H1 (cell line): ENCODE measurements at regions of chr14 and their contacts with region 1.

Region 1: DNA sequence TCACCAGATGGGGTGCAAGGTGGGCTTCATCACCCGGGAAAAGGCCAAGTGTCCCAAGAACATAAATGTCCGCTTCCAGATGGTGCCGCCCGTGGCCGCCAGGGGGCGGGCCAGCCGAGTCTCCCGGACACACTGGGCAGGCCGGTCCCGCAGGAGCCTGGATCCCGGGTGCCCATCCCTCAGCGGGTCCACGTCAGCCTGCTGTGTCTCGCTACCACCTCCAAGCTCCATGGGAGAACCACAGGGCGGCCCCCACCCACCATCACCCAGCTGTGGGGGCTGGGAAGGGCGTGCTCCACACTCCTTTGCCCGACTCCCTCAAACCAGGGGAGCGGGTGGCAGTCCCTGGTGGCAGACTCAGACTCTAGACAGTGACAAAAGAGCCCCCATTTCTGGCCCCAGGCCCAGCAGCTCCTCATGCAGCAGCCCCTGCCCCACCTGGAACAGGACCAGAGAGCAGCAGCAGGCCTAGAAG is 22.0 kb upstream of the NUDT14 start:
- DNase-seq: peak; percentile 27 to 91
- H3K4me3 ChIP-seq: peak overlapping the region in 1 of 4 experiments; percentile 29; a peak in 1 of 8 replicates
- H3K27ac ChIP-seq: no peak overlapping the region
- H3K4me1 ChIP-seq: peaks cover 0 to 10% (median 1%) of the 10 kb centered on the region in 4 experiments; a peak in 3 of 7 replicates
- H3K27me3 ChIP-seq: peaks cover 0 to 5% (median 2%) of the 10 kb centered on the region in 4 experiments; a peak in 3 of 7 replicates
- CTCF ChIP-seq: peak in 2 of 3 experiments; percentile 84 to 85; a peak in 3 of 4 replicates
- EP300 ChIP-seq: no peak
- POLR2A ChIP-seq: no peak
- RAD21 ChIP-seq: peak; percentile 65 to 72

Region 2: DNA sequence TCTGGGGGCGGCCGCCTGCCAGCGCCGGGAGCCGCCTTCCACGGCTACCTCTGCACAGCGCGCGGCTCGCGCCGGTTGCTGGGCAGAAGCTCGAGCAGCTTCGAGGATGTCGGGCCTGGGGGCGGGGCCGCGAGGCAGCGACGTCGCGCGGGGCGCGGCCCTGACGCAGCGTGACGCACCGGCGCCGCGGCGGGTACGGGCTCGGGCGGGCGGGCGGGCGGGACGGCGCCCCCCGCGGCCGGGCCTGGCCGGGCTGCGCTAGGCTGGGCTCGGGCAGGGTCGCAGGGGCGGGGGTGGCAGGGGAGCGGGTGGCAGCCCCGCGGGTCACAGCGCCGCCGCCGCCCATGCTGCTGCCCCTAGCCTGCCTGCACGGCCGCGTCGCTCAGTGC is 45.3 kb after region 1 on chr14 and contains the start of gene BTBD6:
- CTCF ChIA-PET with region 1: interaction called, 12 read pairs
- POLR2A ChIA-PET with region 1: interaction called, 3 read pairs
- DNase-seq: peak; percentile 33 to 84
- H3K4me3 ChIP-seq: peak within 1 kb of the TSS; percentile 37 to 66 (median 44)
- H3K27ac ChIP-seq: peak within 1 kb of the TSS; percentile 3; the same call in 1 of the 2 replicates
- H3K4me1 ChIP-seq: peaks cover 0 to 6% (median 2%) of the 10 kb centered on the region in 4 experiments; a peak in 3 of 7 replicates
- H3K27me3 ChIP-seq: peaks cover 0 to 7% (median 3%) of the 10 kb centered on the region in 4 experiments; a peak in 3 of 7 replicates
- CTCF ChIP-seq: no peak
- EP300 ChIP-seq: no peak
- POLR2A ChIP-seq: peak in 1 of 2 experiments; percentile 37; a peak in 1 of 3 replicates
- RAD21 ChIP-seq: no peak
- total RNA-seq, gene BTBD6: 10.2 and 11.6 TPM in 2 replicates

Region 3: DNA sequence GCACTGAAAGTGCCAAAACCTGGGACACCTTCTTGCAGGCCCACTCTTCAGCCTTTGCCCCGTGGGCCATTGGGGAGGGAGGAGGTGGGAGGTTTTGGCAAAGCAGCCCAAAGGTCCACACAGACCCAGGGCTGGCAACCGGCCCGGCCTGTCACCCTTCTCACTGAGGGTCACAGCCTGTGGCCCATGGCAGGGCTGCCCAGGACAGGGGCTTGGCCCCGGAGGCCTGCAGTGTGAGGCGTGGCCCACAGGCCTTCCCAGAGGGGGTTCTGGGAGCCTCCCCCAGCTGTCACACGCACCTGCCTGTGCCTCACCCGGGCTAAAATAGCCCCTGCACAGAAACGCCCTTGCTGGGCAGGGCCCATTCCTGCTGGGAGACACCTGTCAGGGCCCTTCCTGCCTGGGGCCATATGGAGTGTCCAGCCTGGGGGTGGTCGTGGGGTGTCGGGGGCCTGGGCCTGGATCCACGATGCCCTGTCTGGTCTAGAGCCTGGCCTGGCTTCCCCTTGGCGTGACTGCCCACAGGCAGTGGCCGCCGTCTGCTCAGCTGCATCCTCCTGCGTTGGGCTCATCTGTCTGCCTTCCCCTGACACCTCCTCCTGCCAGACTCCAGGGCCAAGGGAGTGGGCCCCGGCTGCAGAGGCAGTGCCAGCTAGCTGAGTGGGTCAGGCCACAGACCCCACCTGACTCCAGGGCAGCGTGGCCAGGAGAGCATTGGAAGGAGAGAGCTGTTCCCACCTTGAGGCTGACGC is 130.7 kb after region 1 on chr14:
- CTCF ChIA-PET with region 1: interaction called, 11 read pairs
- POLR2A ChIA-PET with region 1: no interaction called
- DNase-seq: no peak
- H3K4me3 ChIP-seq: no peak overlapping the region
- H3K27ac ChIP-seq: no peak overlapping the region
- H3K4me1 ChIP-seq: peaks cover 2 to 17% (median 8%) of the 10 kb centered on the region in 4 experiments; a peak in 6 of 7 replicates
- H3K27me3 ChIP-seq: no peaks in the 10 kb centered on the region
- CTCF ChIP-seq: no peak
- EP300 ChIP-seq: no peak
- POLR2A ChIP-seq: no peak
- RAD21 ChIP-seq: no peak